ENCODE measurements at regions of chr5 and their contacts with region 1.

Region 1: GRCh38 chr5:44774279-44774880 is 34.4 kb upstream of the MRPS30 start:
- DNase-seq: no peak
- H3K4me3 ChIP-seq: no peak overlapping the region
- H3K27ac ChIP-seq: no peak overlapping the region
- H3K4me1 ChIP-seq: no peaks in the 10 kb centered on the region
- H3K27me3 ChIP-seq: no peaks in the 10 kb centered on the region
- CTCF ChIP-seq: peak; percentile 49 to 61

Region 2: DNA sequence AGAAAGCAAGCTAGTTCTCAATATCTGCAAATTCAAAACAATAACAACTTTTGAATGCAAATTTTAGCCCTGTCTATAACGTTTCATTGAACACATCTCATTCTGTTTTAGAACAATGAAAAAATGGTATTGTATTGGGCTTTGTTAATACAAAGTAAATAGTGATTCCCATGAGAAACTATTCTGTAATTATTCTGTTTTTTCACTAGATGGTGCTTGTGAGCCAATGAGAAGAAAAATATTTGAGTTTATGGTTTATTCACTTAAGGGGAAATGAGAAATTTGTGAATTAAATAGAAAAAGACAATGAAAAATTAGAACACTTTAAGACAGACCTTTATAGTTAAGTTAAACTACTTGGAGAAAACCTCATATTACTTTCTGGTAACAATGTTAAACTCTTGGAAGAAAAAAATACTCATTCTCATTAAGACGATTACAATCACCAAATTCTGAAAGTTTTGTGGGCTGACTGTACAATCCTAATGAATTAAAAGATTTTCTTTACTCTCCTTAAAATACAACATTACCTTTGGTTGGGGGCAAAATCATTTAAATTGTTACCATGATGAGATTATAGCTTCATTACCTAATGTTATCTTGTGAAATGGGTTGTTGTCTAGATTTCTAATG is 1044.4 kb before region 1 on chr5:
- intact Hi-C with region 1: loop called (anchors 10 kb)
- DNase-seq: no peak
- H3K4me3 ChIP-seq: no peak overlapping the region
- H3K27ac ChIP-seq: peak overlapping the region in 1 of 2 donors; percentile 20
- H3K4me1 ChIP-seq: peaks cover 0 to 18% (median 3%) of the 10 kb centered on the region in 4 donors
- H3K27me3 ChIP-seq: no peaks in the 10 kb centered on the region
- CTCF ChIP-seq: peak; percentile 61 to 66